ENCODE measurements at regions of chr14 and their contacts with region 1.

Region 1: GRCh38 chr14:20413045-20413799 is at the start of gene TEP1:
- DNase-seq: peak; percentile 73
- ATAC-seq: peak; percentile 79
- H3K4me3 Mint-ChIP-seq: peak within 1 kb of the TSS; percentile 99
- H3K27ac Mint-ChIP-seq: peak within 1 kb of the TSS; percentile 99
- H3K4me1 Mint-ChIP-seq: peaks cover 49% of the 10 kb centered on the region
- H3K27me3 Mint-ChIP-seq: no peaks in the 10 kb centered on the region
- CTCF ChIP-seq: no peak
- total RNA-seq, gene TEP1: 99.0 and 120 TPM in 2 replicates

Region 2: GRCh38 chr14:20247646-20248246 is 165.5 kb before region 1 on chr14:
- CTCF ChIA-PET with region 1: no interaction called
- POLR2A ChIA-PET with region 1: no interaction called
- intact Hi-C with region 1: no loop called
- DNase-seq: no peak
- ATAC-seq: no peak
- H3K4me3 Mint-ChIP-seq: no peak overlapping the region
- H3K27ac Mint-ChIP-seq: no peak overlapping the region
- H3K4me1 Mint-ChIP-seq: no peaks in the 10 kb centered on the region
- H3K27me3 Mint-ChIP-seq: peaks cover 2% of the 10 kb centered on the region
- CTCF ChIP-seq: no peak

Region 3: GRCh38 chr14:20327005-20327869 is 86.0 kb before region 1 on chr14:
- CTCF ChIA-PET with region 1: interaction called, 9 read pairs
- POLR2A ChIA-PET with region 1: no interaction called
- intact Hi-C with region 1: loop called (anchors 1 kb)
- DNase-seq: no peak
- ATAC-seq: peak; percentile 49
- H3K4me3 Mint-ChIP-seq: no peak overlapping the region
- H3K27ac Mint-ChIP-seq: peak overlapping the region; percentile 42
- H3K4me1 Mint-ChIP-seq: peaks cover 26% of the 10 kb centered on the region
- H3K27me3 Mint-ChIP-seq: no peaks in the 10 kb centered on the region
- CTCF ChIP-seq: no peak

Region 4: DNA sequence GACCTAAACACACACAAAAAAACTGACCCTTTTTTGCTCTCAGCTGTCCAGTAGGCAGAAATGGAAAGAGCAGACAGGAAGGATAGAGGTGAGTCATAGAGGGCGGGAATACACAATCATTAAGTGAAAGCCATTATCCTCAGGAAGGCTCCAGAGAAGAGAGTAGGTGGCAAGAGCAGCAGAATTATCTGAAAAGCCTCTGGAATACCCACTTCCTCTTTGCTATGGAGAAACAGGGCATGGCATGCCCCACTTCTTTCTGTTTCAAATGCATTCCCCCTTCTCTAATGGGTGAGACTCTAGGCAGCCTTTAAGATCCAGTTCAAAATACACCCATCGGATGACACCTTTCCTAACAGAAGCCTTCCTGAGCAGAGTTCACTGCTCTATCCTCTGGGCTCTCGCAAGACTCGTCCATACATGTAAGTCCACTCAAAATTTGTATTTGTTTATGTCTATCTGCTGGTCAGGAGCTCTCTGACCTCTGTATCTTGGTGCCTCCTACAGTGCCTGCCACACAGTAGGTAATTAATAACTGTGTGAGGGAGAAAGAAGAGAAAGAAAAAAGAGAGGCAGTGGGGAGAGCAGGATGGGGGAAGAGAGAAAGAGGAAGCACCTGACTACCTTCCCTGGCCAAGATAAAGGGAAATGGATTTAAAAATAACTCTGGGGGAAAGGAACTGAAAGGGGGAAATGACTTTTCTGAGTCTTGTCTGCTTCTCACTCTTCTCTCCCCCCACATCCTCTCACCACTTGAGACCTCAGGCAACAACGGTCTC is 14.2 kb after region 1 on chr14:
- CTCF ChIA-PET with region 1: interaction called, 27 read pairs
- POLR2A ChIA-PET with region 1: interaction called, 11 read pairs
- intact Hi-C with region 1: loop called (anchors 1 kb)
- DNase-seq: no peak
- ATAC-seq: peak; percentile 75
- H3K4me3 Mint-ChIP-seq: peak overlapping the region; percentile 73
- H3K27ac Mint-ChIP-seq: peak overlapping the region; percentile 96
- H3K4me1 Mint-ChIP-seq: peaks cover 57% of the 10 kb centered on the region
- H3K27me3 Mint-ChIP-seq: no peaks in the 10 kb centered on the region
- CTCF ChIP-seq: no peak

Region 5: DNA sequence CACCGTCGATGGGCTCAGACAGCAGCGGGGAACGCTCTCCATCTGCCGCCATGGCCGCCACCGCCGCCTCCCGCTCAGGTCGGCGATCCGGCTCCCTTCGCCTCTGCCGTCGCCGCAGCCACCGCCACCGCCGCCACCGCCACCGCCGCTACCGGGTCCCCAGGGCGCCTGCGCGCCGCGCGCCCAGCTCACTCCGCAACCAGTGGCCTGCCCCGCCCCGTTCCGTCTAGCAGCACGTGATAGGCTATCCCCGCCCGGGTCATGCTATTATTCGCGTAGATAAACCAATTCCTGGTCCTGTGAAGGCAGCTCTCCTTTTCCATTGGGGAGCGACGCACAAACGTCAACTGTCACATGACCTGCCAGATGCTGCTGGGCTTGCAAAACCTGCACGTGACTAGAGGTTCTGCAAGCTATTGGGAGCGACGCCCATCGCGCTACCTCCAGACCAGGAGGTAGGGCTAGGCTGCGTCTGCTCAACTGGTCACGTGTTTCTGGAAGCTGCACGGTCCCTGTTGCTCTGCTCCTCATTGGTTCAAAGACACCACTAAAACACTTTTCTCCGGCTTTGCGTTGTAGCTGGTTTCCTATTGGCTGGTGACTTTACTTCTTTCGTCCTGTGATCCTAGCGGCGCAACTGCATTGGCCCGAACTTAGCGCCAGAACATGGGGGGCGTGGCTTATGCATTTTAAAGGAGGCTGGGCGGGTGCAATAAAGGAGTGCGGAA is 48.2 kb after region 1 on chr14 and contains the start of gene PIP4P1:
- CTCF ChIA-PET with region 1: interaction called, 29 read pairs
- POLR2A ChIA-PET with region 1: interaction called, 68 read pairs
- intact Hi-C with region 1: loop called (anchors 1 kb)
- DNase-seq: peak; percentile 94
- ATAC-seq: peak; percentile 86
- H3K4me3 Mint-ChIP-seq: peak within 1 kb of the TSS; percentile 91
- H3K27ac Mint-ChIP-seq: peak within 1 kb of the TSS; percentile 96
- H3K4me1 Mint-ChIP-seq: peaks cover 55% of the 10 kb centered on the region
- H3K27me3 Mint-ChIP-seq: no peaks in the 10 kb centered on the region
- CTCF ChIP-seq: no peak
- total RNA-seq, gene PIP4P1: 84.8 and 87.3 TPM in 2 replicates

Region 6: GRCh38 chr14:20489093-20489994 is 76.1 kb after region 1 on chr14:
- CTCF ChIA-PET with region 1: interaction called, 9 read pairs
- POLR2A ChIA-PET with region 1: interaction called, 4 read pairs
- intact Hi-C with region 1: loop called (anchors 2 kb)
- DNase-seq: no peak
- ATAC-seq: peak; percentile 83
- H3K4me3 Mint-ChIP-seq: peak overlapping the region; percentile 75
- H3K27ac Mint-ChIP-seq: peak overlapping the region; percentile 84
- H3K4me1 Mint-ChIP-seq: peaks cover 70% of the 10 kb centered on the region
- H3K27me3 Mint-ChIP-seq: no peaks in the 10 kb centered on the region
- CTCF ChIP-seq: no peak

Region 7: GRCh38 chr14:20613094-20614037 is 200.1 kb after region 1 on chr14:
- CTCF ChIA-PET with region 1: interaction called, 53 read pairs
- POLR2A ChIA-PET with region 1: interaction called, 9 read pairs
- intact Hi-C with region 1: loop called (anchors 1 kb)
- DNase-seq: peak; percentile 62
- ATAC-seq: peak; percentile 72
- H3K4me3 Mint-ChIP-seq: no peak overlapping the region
- H3K27ac Mint-ChIP-seq: no peak overlapping the region
- H3K4me1 Mint-ChIP-seq: peaks cover 12% of the 10 kb centered on the region
- H3K27me3 Mint-ChIP-seq: no peaks in the 10 kb centered on the region
- CTCF ChIP-seq: no peak

Region 8: DNA sequence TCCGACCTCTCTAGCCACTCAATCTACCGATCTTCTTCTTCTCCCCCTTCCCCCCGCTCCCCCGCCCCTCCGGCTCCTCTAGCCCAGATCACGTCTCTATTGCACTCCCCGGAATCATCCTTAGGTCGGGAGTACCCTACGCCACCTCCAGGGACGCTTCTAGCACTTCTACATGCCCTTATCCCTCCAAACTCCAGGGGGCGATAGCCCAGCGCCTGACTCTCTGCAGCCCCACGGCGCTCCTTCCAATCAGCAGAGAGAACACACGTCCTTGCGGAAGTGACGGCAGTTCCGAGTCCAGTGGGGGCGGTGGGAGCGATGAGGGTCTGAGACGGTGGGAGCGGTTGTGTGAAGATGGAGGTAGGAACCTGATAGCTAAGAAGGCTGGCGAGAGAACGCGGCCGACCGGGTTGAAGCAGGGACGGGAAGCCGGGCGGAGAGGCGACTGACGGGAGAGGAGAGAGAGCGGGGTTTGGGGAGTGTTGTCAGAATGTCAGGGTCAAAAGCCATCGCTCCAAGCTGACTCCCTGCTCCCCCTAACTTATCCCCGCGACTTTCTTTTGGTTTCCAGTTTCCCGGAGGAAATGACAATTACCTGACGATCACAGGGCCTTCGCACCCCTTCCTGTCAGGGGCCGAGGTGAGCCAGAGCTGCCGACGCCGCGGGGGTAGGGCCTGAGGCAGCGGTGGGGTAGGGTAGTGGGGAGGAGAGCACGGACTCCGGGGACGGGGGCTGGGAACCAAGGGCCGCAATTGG is 1063.9 kb after region 1 on chr14 and contains the starts of genes RAB2B and TOX4:
- CTCF ChIA-PET with region 1: no interaction called
- POLR2A ChIA-PET with region 1: no interaction called
- intact Hi-C with region 1: loop called (anchors 2 kb)
- DNase-seq: peak; percentile 84
- ATAC-seq: peak; percentile 96
- H3K4me3 Mint-ChIP-seq: peak within 1 kb of the TSS; percentile 99
- H3K27ac Mint-ChIP-seq: peak within 1 kb of the TSS; percentile 95
- H3K4me1 Mint-ChIP-seq: peaks cover 37% of the 10 kb centered on the region
- H3K27me3 Mint-ChIP-seq: no peaks in the 10 kb centered on the region
- CTCF ChIP-seq: no peak
- total RNA-seq, gene RAB2B: 25.0 and 27.5 TPM in 2 replicates
- total RNA-seq, gene TOX4: 77.2 and 81.4 TPM in 2 replicates

Measured in activated B cell treated with CpG ODN at 0.5 μM for 24 hours (primary cell).